ENCODE measurements at regions of chr11 and their contacts with region 1.

Region 1: DNA sequence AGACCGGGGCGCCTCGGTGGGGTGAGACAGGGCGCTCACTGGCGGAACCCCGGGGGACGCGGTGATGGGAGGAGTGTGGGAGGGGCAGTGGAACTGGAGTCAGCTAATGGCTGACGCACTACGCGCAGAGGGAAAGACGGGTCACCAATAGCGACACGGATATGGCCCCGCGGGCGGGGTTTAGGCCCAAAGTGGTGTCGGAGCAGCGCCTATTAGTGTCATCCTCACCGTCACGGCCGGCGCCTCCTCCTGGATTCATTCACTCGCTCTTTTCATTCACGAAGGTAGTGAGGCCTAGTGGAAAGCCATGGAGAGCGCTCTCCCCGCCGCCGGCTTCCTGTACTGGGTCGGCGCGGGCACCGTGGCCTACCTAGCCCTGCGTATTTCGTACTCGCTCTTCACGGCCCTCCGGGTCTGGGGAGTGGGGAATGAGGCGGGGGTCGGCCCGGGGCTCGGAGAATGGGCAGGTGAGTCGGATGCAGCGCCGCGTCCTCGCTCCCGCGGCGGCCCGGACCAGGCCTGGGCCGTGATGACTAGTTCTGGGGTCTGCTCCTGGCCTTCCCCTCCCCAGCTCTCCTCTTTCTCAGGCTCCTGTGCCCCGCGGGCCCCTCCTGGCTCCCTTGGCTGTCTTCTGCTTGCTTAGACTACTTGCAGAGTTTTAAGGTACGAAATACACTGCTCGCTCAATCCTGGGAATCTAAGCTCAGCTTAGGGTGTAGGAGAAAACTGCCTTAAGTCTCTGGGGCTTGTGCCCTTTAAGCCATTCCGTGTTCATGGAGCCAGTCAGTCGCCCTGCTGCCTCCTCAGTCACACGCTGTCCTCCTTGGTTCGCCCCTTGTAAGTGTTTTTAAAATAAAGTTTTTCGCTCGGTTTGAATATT is at the start of gene HSD17B12:
- DNase-seq: peak; percentile 99
- ATAC-seq: peak; percentile 98
- H3K4me3 Mint-ChIP-seq: peak within 1 kb of the TSS; percentile 86
- H3K27ac Mint-ChIP-seq: peak within 1 kb of the TSS; percentile 88
- H3K4me1 Mint-ChIP-seq: peaks cover 27% of the 10 kb centered on the region
- H3K27me3 Mint-ChIP-seq: peaks cover 4% of the 10 kb centered on the region
- CTCF ChIP-seq: no peak
- total RNA-seq, gene HSD17B12: 44.8 to 46.8 TPM

Region 2: DNA sequence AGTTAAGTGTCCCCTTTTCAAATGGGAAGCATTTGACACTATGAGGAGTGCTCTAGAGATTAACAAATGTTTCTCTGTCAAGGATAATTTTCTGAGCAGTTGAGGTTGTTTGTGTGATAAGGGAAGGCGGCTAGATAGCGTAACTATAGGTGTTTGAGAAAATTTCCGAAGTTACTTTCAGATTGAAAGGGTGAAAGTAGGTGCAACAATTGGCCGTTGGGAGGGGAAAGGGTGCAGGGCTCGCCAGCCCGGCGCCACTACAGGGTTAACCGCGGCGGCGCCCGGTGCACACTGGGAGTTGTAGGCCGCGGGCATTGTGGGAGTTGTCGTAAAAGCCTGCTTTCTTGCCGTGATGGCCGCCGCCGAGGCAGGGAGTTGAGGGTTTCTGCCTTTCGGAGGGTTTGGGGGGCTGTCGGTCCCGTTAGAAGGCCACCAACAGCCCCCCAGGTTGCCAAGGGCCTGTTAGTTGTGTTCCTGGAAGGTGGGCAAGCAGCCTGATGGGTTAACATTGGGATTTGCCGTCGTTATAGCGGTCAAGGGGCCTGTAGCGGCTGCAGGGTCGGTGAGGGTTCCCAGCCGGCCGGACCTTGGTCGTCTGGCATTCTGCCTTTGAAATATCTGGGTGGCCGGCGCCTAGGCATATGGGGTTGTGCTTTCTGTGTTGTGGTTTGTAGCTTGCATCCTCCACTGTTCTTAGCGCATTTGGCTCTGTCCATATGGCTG is 36.7 kb before region 1 on chr11:
- CTCF ChIA-PET with region 1: no interaction called
- POLR2A ChIA-PET with region 1: interaction called, 7 read pairs
- intact Hi-C with region 1: loop called (anchors 5 kb)
- DNase-seq: peak; percentile 94
- ATAC-seq: peak; percentile 100
- H3K4me3 Mint-ChIP-seq: peak overlapping the region; percentile 96
- H3K27ac Mint-ChIP-seq: peak overlapping the region; percentile 93
- H3K4me1 Mint-ChIP-seq: peaks cover 23% of the 10 kb centered on the region
- H3K27me3 Mint-ChIP-seq: peaks cover 15% of the 10 kb centered on the region
- CTCF ChIP-seq: no peak